ENCODE measurements at regions of chr17 and their contacts with region 1.

Region 1: GRCh38 chr17:74249590-74250270 is 24.3 kb upstream of the DNAI2 start:
- DNase-seq: no peak
- H3K4me3 ChIP-seq: no peak overlapping the region
- H3K27ac ChIP-seq: no peak overlapping the region
- H3K4me1 ChIP-seq: no peaks in the 10 kb centered on the region
- H3K27me3 ChIP-seq: no peaks in the 10 kb centered on the region
- CTCF ChIP-seq: no peak

Region 2: DNA sequence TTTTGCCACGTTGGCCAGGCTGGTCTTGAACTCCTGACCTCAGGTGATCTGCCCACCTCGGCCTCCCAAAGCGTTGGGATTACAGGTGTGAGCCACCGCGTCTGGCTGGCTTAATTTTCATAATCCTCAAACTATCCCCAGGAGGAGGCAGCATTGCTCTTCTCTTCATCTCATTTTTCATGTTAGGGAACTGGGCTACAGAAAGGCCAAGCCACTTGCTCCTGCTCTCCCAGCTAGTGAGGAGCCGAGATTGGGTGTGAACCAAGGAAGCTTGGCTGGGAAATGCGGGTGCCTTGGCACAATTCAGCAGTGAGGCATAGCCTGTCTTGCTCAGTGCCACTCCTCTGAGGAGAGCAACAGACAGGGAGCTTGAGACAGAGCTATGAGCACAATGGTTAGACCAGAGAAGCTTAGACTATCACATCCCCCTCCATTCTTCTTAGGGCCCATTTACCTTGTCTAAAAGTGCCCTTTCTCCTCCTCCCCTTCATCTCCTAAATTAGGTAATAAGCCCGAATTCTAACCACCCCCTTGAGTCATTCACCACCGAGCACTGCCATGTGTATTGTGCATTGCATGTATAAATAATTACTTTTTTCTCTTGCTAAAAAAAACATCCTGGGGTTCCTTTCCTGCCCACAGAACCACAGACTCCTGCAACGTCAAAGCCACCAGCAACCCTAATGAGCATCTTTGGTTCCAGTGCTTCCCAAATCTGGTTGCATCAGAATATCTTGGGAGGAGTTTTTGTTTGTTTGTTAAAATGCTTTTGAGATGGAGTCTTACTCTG is 56.3 kb after region 1 on chr17:
- CTCF ChIA-PET with region 1: no interaction called
- dilution Hi-C with region 1: loop called (anchors 5 kb)
- in situ Hi-C with region 1: no loop called
- intact Hi-C with region 1: no loop called
- DNase-seq: no peak
- H3K4me3 ChIP-seq: no peak overlapping the region
- H3K27ac ChIP-seq: no peak overlapping the region
- H3K4me1 ChIP-seq: no peaks in the 10 kb centered on the region
- H3K27me3 ChIP-seq: no peaks in the 10 kb centered on the region
- CTCF ChIP-seq: peak in 1 of 2 donors; percentile 7

Region 3: GRCh38 chr17:74457146-74457819 is 207.6 kb after region 1 on chr17:
- CTCF ChIA-PET with region 1: no interaction called
- dilution Hi-C with region 1: no loop called
- in situ Hi-C with region 1: no loop called
- intact Hi-C with region 1: no loop called
- DNase-seq: peak; percentile 17
- H3K4me3 ChIP-seq: no peak overlapping the region
- H3K27ac ChIP-seq: no peak overlapping the region
- H3K4me1 ChIP-seq: peaks cover 9% of the 10 kb centered on the region
- H3K27me3 ChIP-seq: no peaks in the 10 kb centered on the region
- CTCF ChIP-seq: peak; percentile 84 to 92